CD8-positive, alpha-beta T cell (primary cell): ENCODE measurements at regions of chr6 and their contacts with region 1.

Region 1: DNA sequence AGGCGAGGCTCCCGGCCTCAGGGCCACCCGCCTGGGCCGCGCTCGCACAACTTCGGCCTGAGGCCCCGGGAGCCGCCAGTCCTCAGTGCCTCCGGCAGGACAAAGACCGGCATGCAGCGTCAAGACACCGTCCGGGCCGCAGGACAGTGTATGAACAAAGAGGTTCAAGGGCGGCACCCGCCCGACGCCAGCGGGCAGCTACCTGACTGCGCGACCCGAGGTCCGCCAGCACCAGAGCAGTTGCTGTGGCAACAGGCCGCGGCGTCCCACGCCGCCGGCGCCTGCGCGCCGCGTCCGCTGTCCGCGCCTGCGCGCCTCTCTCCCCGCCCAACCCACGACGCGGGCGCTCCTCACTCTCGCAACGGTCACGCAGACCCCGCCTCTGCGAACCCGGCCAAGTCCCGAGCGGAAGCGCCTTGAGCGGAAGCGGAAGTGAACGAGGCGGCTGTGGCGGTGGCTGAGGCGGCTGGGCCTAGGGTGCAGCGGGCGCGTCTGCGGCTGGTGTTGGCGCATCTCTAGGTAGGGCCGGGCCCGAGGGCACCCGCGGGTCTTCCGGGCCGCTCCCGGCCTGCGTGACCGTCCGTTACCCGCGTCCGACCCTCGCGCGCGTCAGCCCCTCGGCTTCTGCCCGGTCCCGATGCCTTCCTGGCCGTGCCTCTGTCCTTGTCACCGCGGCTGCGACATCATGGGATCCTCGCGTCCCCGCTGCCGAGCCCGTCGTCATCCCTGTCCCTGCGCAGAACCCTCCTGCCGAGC is at the start of gene FAM120B:
- DNase-seq: peak; percentile 92 to 98 (median 96)
- ATAC-seq: peak; percentile 93
- H3K4me3 ChIP-seq: peak within 1 kb of the TSS; percentile 76 to 92
- H3K4me3 Mint-ChIP-seq: peak within 1 kb of the TSS; percentile 96
- H3K27ac ChIP-seq: peak within 1 kb of the TSS; percentile 84 to 88
- H3K27ac Mint-ChIP-seq: peak within 1 kb of the TSS; percentile 97
- H3K4me1 ChIP-seq: peaks cover 40% of the 10 kb centered on the region
- H3K4me1 Mint-ChIP-seq: peaks cover 43% of the 10 kb centered on the region
- H3K27me3 ChIP-seq: no peaks in the 10 kb centered on the region
- H3K27me3 Mint-ChIP-seq: peaks cover 11% of the 10 kb centered on the region
- CTCF ChIP-seq: no peak
- total RNA-seq, gene FAM120B: 24.0 to 25.3 TPM

Region 2: GRCh38 chr6:169959136-169960002 is 347.1 kb before region 1 on chr6:
- CTCF ChIA-PET with region 1: interaction called, 4 read pairs
- POLR2A ChIA-PET with region 1: no interaction called
- intact Hi-C with region 1: loop called in 1 of 2 experiments (anchors 5 kb)
- DNase-seq: peak; percentile 42 to 90 (median 61)
- ATAC-seq: peak; percentile 93
- H3K4me3 ChIP-seq: peak overlapping the region; percentile 0 to 3
- H3K4me3 Mint-ChIP-seq: peak overlapping the region; percentile 65
- H3K27ac ChIP-seq: peak overlapping the region; percentile 50 to 53
- H3K27ac Mint-ChIP-seq: peak overlapping the region; percentile 94
- H3K4me1 ChIP-seq: peaks cover 15% of the 10 kb centered on the region
- H3K4me1 Mint-ChIP-seq: peaks cover 26% of the 10 kb centered on the region
- H3K27me3 ChIP-seq: peaks cover 0 to 7% of the 10 kb centered on the region in 2 experiments
- H3K27me3 Mint-ChIP-seq: peaks cover 3% of the 10 kb centered on the region
- CTCF ChIP-seq: peak; percentile 33

Region 3: GRCh38 chr6:170087941-170088581 is 218.4 kb before region 1 on chr6:
- CTCF ChIA-PET with region 1: no interaction called
- POLR2A ChIA-PET with region 1: no interaction called
- intact Hi-C with region 1: loop called in 1 of 2 experiments (anchors 5 kb)
- DNase-seq: peak; percentile 22 to 87 (median 66)
- ATAC-seq: peak; percentile 62
- H3K4me3 ChIP-seq: peak overlapping the region; percentile 48 to 73
- H3K4me3 Mint-ChIP-seq: peak overlapping the region; percentile 91
- H3K27ac ChIP-seq: peak overlapping the region; percentile 63 to 73
- H3K27ac Mint-ChIP-seq: peak overlapping the region; percentile 95
- H3K4me1 ChIP-seq: peaks cover 27% of the 10 kb centered on the region
- H3K4me1 Mint-ChIP-seq: peaks cover 33% of the 10 kb centered on the region
- H3K27me3 ChIP-seq: peaks cover 0 to 4% of the 10 kb centered on the region in 2 experiments
- H3K27me3 Mint-ChIP-seq: no peaks in the 10 kb centered on the region
- CTCF ChIP-seq: no peak

Region 4: DNA sequence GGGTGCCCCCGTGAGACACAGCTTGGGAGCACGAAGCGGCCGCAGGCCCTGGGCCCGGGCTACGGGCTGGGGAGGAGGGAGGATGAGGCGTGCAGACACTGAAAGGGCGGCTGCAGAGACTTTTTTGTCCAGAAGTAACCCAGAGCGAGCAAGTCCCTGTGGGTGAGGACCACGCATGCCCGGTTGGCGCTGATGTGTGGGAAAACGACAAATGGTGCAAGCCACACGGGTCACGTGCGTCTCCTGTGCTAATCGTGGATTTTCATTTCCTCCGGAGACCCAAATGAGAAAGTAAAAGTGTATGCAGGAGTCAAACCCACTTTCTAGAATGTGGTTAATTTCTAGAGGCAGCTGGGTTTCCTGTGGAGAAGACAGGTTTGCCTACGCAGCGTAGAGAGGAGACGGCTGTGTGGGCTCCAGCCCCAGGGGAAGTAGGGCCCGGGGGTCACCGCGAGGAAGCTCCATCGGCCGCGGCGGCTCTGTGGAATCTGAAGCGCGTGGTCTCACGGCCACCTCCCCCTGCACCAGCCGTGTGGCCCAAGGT is 34.7 kb before region 1 on chr6:
- CTCF ChIA-PET with region 1: no interaction called
- POLR2A ChIA-PET with region 1: interaction called, 8 read pairs
- intact Hi-C with region 1: loop called (anchors 1 to 2 kb)
- DNase-seq: peak; percentile 51 to 95 (median 80)
- ATAC-seq: peak; percentile 93
- H3K4me3 ChIP-seq: peak overlapping the region; percentile 46 to 54
- H3K4me3 Mint-ChIP-seq: peak overlapping the region; percentile 88
- H3K27ac ChIP-seq: peak overlapping the region; percentile 63 to 71
- H3K27ac Mint-ChIP-seq: peak overlapping the region; percentile 93
- H3K4me1 ChIP-seq: peaks cover 25% of the 10 kb centered on the region
- H3K4me1 Mint-ChIP-seq: peaks cover 24% of the 10 kb centered on the region
- H3K27me3 ChIP-seq: peaks cover 0 to 19% of the 10 kb centered on the region in 2 experiments
- H3K27me3 Mint-ChIP-seq: no peaks in the 10 kb centered on the region
- CTCF ChIP-seq: no peak

Region 5: GRCh38 chr6:170554013-170554795 is 247.7 kb after region 1 on chr6 and contains the start of gene TBP:
- CTCF ChIA-PET with region 1: no interaction called
- POLR2A ChIA-PET with region 1: no interaction called
- intact Hi-C with region 1: loop called (anchors 1 to 2 kb)
- DNase-seq: peak; percentile 93 to 99 (median 98)
- ATAC-seq: peak; percentile 91
- H3K4me3 ChIP-seq: peak within 1 kb of the TSS; percentile 61 to 93
- H3K4me3 Mint-ChIP-seq: no peak within 1 kb of the TSS
- H3K27ac ChIP-seq: peak within 1 kb of the TSS; percentile 89 to 96
- H3K27ac Mint-ChIP-seq: no peak within 1 kb of the TSS
- H3K4me1 ChIP-seq: peaks cover 39% of the 10 kb centered on the region
- H3K4me1 Mint-ChIP-seq: peaks cover 38% of the 10 kb centered on the region
- H3K27me3 ChIP-seq: no peaks in the 10 kb centered on the region
- H3K27me3 Mint-ChIP-seq: no peaks in the 10 kb centered on the region
- CTCF ChIP-seq: no peak
- total RNA-seq, gene TBP: 13.8 to 13.9 TPM

Region 6: GRCh38 chr6:170584181-170584953 is 277.9 kb after region 1 on chr6 and contains the start of gene PDCD2:
- CTCF ChIA-PET with region 1: no interaction called
- POLR2A ChIA-PET with region 1: no interaction called
- intact Hi-C with region 1: loop called in 1 of 2 experiments (anchors 10 kb)
- DNase-seq: peak; percentile 78 to 96 (median 92)
- ATAC-seq: peak; percentile 92
- H3K4me3 ChIP-seq: peak within 1 kb of the TSS; percentile 73 to 91
- H3K4me3 Mint-ChIP-seq: peak within 1 kb of the TSS; percentile 97
- H3K27ac ChIP-seq: peak within 1 kb of the TSS; percentile 77 to 89
- H3K27ac Mint-ChIP-seq: peak within 1 kb of the TSS; percentile 98
- H3K4me1 ChIP-seq: peaks cover 21% of the 10 kb centered on the region
- H3K4me1 Mint-ChIP-seq: peaks cover 33% of the 10 kb centered on the region
- H3K27me3 ChIP-seq: no peaks in the 10 kb centered on the region
- H3K27me3 Mint-ChIP-seq: no peaks in the 10 kb centered on the region
- CTCF ChIP-seq: no peak
- total RNA-seq, gene PDCD2: 43.9 to 46.3 TPM